Mammary epithelial cell (primary cell): ENCODE measurements at regions of chr22 and their contacts with region 1.

Region 1: DNA sequence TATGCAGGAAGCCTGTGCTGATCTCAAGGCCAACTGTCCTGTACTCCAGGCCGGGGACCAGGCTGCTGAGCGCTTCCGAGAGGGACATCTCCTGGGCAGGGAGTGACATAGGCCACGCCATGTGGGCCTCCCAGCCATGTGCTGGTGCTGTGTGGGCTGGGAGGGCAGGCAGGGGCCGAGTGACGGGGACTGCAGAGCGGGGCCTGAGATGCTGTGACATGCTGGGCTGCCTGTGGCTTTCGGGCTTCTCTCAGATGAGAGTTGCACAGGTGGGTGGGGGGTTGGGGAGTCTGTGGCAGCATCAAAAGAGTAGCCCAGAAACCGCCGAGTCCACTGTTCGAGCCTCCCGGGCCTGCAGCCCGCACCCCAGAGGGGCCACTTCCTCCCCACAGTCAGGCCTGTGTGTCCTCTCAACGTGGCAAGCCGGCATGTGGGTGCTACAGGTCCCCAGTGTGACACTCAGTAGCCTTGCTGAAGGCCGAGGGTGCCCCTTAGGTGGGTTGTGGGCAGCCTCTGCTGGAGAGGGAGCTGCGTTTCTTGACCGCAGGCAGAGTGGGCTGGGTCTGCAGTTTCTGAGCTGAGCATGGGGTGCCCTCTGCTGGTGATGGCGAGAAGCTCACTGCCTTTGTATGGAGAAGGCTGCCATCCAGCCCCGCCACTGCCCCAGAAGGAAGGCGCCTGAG is 101.2 kb downstream of the BCR start:
- DNase-seq: peak; percentile 81
- H3K4me3 ChIP-seq: peak overlapping the region in 2 of 3 experiments; percentile 15 to 26
- H3K27ac ChIP-seq: peak overlapping the region; percentile 73
- H3K4me1 ChIP-seq: peaks cover 62% of the 10 kb centered on the region
- H3K27me3 ChIP-seq: no peaks in the 10 kb centered on the region
- CTCF ChIP-seq: peak; percentile 90 to 94

Region 2: DNA sequence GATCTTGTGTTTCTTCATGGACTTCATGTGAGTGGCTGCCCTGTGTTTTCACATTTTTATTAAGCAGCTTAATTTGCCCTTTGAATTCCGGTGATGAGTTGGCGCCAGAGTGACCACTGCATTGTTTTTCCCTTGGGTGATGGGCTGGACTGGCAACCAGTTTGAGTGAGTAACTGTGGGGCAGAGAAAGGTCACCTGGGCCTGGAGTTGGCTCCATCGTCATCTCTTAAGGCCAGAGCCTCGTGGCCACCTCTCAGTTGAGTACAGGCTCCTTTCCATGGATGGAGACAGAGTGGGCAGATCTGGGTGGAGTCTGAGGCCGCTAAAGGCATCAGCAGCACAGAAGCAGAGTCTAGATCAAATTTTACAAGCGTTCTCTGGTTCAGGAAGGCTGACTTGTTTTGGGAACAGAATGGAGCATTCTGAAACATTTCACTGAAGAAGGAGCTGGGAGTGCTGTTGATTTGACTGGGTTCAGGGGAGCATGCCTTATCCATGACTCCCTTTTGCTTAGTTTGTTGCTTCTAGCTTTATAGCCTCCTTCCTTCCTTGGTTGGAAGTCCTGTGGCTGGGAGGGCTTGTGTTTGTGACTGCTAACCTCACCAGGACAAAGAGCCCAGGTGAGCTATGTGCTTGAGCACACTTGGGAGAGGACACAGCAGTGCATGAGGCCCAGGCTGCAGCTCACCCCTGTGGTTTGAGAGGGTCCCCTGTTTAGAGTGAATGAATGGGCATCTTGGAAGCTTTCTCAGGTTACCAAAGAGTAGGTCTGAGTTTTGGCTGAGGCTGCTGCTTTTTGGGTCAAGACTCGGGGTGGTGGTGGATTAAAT is 93.5 kb before region 1 on chr22:
- CTCF ChIA-PET with region 1: interaction called, 10 read pairs
- dilution Hi-C with region 1: loop called (anchors 5 kb)
- in situ Hi-C with region 1: loop called (anchors 5 kb)
- intact Hi-C with region 1: no loop called
- DNase-seq: no peak
- H3K4me3 ChIP-seq: no peak overlapping the region
- H3K27ac ChIP-seq: no peak overlapping the region
- H3K4me1 ChIP-seq: peaks cover 9% of the 10 kb centered on the region
- H3K27me3 ChIP-seq: no peaks in the 10 kb centered on the region
- CTCF ChIP-seq: no peak

Region 3: GRCh38 chr22:23204541-23205157 is 76.9 kb before region 1 on chr22:
- CTCF ChIA-PET with region 1: no interaction called
- dilution Hi-C with region 1: no loop called
- in situ Hi-C with region 1: no loop called
- intact Hi-C with region 1: loop called (anchors 1 kb)
- DNase-seq: no peak
- H3K4me3 ChIP-seq: no peak overlapping the region
- H3K27ac ChIP-seq: no peak overlapping the region
- H3K4me1 ChIP-seq: peaks cover 19% of the 10 kb centered on the region
- H3K27me3 ChIP-seq: no peaks in the 10 kb centered on the region
- CTCF ChIP-seq: no peak

Region 4: DNA sequence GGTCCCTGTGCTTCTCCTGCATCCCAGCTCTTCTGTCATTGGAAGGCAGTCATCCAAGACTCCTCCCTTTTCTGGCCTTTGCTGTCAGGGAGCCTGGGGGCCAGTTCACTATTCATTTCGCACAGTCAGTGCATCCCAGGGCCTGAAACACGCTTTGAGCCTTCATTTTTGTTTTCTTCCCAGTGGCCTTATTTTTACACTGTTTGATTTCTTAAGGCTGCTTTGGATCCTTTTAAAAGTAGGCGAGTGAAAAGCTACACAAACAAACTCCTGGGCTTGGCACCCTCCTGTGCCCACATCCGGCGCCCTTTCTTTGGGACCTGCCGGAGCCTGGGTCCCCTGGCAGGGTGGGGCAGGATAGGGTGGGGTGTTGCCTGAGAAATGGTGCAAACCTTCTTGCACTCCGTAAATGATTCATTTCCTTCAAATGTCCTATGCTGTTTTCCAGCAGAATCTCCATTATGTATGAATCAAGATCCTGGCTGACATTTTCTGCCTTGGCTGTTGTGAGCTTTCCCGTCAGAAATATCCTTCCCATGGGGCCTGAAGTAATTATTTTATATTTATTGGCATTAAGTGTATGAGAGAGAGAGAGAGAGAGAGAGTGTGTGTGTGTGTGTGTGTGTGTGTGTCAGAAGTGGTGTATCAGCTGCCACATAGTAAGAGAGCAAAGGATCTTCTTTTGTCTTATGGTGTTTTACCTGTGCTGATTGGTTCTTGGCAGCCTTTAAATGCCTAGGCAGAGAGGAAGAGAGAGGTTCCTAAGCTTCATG is 55.6 kb before region 1 on chr22:
- CTCF ChIA-PET with region 1: no interaction called
- dilution Hi-C with region 1: loop called (anchors 5 kb)
- in situ Hi-C with region 1: no loop called
- intact Hi-C with region 1: loop called (anchors 5 kb)
- DNase-seq: peak; percentile 84
- H3K4me3 ChIP-seq: peak overlapping the region in 2 of 3 experiments; percentile 27 to 34
- H3K27ac ChIP-seq: peak overlapping the region; percentile 91
- H3K4me1 ChIP-seq: peaks cover 47% of the 10 kb centered on the region
- H3K27me3 ChIP-seq: no peaks in the 10 kb centered on the region
- CTCF ChIP-seq: no peak